ENCODE measurements at regions of chr7 and their contacts with region 1.

Region 1: DNA sequence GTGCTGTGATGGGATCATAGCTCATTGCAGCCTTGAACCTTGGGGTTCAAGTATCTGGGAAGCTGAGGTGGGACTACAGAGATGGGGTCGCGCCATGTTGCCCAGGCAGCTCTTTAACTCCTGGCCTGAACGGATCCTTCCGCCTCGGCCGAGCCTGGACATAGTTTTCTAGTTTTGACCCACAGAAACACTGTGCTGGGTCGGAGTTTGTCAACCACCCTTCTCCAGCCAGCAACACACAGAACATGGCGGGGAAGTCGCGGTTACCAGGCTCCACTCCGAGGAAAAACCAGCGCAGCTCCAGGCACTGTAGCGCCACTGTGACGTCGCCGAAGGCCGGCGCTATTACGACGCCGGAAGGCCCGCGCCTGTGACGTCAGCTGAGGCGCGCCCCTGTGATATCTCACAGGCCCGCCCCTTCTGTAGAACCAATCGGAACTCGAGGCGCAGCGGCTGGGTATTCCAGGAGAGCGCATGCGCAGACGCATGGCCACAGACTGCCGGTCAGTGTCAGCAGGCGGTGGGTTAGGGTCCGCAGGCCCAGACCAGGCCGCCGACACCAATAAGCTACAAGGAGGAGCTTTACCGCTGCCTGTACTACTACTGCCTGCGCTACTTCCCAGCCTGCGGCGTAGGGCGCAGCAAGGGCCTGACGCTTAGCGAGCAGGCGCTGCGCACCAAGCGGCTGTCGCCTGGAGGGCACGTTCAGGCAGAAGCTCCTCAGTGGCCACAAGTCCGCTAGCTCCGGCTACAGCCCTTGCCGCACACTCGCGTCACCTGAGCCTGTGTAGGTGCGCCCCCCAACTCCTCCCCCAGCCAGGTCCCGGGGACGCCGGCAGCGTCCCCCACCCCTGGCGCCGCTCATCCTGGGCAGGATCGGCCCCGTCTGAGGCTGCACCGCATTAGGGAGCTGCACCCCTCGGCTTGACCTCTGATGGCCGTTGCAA is 135.2 kb upstream of the KCTD7 start:
- DNase-seq: peak; percentile 91 to 99 (median 95)
- ATAC-seq: peak; percentile 92
- H3K4me3 ChIP-seq: peak overlapping the region; percentile 87
- H3K4me3 Mint-ChIP-seq: peak overlapping the region; percentile 97
- H3K27ac ChIP-seq: peak overlapping the region; percentile 86 to 95
- H3K27ac Mint-ChIP-seq: peak overlapping the region; percentile 100
- H3K4me1 ChIP-seq: peaks cover 20% of the 10 kb centered on the region
- H3K4me1 Mint-ChIP-seq: peaks cover 22% of the 10 kb centered on the region
- H3K27me3 ChIP-seq: no peaks in the 10 kb centered on the region
- H3K27me3 Mint-ChIP-seq: no peaks in the 10 kb centered on the region
- CTCF ChIP-seq: no peak

Region 2: GRCh38 chr7:64794171-64794844 is 1699.2 kb before region 1 on chr7 and contains the start of gene ZNF138:
- CTCF ChIA-PET with region 1: no interaction called
- POLR2A ChIA-PET with region 1: no interaction called
- intact Hi-C with region 1: loop called in 1 of 2 experiments (anchors 10 kb)
- DNase-seq: peak; percentile 86 to 96 (median 92)
- ATAC-seq: peak; percentile 99
- H3K4me3 ChIP-seq: peak within 1 kb of the TSS; percentile 98
- H3K4me3 Mint-ChIP-seq: peak within 1 kb of the TSS; percentile 98
- H3K27ac ChIP-seq: peak within 1 kb of the TSS; percentile 72 to 88
- H3K27ac Mint-ChIP-seq: peak within 1 kb of the TSS; percentile 98
- H3K4me1 ChIP-seq: peaks cover 27% of the 10 kb centered on the region
- H3K4me1 Mint-ChIP-seq: peaks cover 36% of the 10 kb centered on the region
- H3K27me3 ChIP-seq: no peaks in the 10 kb centered on the region
- H3K27me3 Mint-ChIP-seq: no peaks in the 10 kb centered on the region
- CTCF ChIP-seq: no peak
- total RNA-seq, gene ZNF138: 5.6 to 7.3 TPM

Region 3: DNA sequence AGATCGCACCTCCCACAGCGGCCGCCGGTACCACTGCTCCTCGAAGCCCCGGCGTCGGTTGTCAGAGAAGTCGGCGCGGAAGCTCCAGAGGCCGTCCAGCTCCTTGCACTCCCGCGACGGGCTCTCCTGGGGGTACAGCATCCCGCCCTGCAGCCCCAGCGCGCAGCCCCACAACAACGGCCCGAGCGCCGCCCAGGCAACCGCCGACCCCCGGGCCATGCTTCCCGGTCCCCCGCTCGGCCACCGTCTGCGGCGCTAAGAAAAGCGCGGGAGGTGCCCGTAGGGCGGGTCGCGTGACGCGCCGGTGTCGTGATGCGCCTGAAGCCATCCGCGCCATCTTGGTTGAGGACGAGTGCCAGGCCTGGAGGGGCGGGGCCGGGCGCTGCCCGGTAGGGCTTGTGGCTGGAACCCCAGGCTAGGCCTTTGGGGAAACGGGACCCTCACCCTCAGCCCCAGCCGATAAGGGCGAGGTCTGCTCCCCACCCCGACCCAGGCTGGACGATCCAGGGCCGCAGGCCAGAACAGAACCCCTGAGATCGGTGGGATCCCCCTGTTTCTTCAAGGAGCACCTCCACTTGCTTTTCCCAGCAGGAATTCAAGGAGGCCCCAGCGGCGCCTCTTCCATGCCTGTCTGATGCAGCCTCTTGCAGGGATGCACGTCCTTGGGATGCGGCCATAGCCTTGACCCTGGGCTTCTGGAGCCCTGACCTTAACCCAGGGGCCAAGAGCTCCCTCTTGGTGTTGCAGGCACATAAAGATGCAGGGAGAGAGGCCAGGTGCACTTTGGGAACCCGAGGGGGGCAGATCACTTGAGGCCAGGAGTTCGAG is 511.3 kb before region 1 on chr7 and contains the start of gene GUSB:
- CTCF ChIA-PET with region 1: no interaction called
- POLR2A ChIA-PET with region 1: interaction called, 9 read pairs
- intact Hi-C with region 1: loop called in 1 of 2 experiments (anchors 5 kb)
- DNase-seq: peak; percentile 80 to 92 (median 88)
- ATAC-seq: peak; percentile 83
- H3K4me3 ChIP-seq: peak within 1 kb of the TSS; percentile 83
- H3K4me3 Mint-ChIP-seq: peak within 1 kb of the TSS; percentile 92
- H3K27ac ChIP-seq: peak within 1 kb of the TSS in 1 of 2 donors; percentile 68
- H3K27ac Mint-ChIP-seq: peak within 1 kb of the TSS; percentile 84
- H3K4me1 ChIP-seq: peaks cover 31% of the 10 kb centered on the region
- H3K4me1 Mint-ChIP-seq: peaks cover 9% of the 10 kb centered on the region
- H3K27me3 ChIP-seq: no peaks in the 10 kb centered on the region
- H3K27me3 Mint-ChIP-seq: no peaks in the 10 kb centered on the region
- CTCF ChIP-seq: no peak
- total RNA-seq, gene GUSB: 42.9 to 49.7 TPM

Region 4: DNA sequence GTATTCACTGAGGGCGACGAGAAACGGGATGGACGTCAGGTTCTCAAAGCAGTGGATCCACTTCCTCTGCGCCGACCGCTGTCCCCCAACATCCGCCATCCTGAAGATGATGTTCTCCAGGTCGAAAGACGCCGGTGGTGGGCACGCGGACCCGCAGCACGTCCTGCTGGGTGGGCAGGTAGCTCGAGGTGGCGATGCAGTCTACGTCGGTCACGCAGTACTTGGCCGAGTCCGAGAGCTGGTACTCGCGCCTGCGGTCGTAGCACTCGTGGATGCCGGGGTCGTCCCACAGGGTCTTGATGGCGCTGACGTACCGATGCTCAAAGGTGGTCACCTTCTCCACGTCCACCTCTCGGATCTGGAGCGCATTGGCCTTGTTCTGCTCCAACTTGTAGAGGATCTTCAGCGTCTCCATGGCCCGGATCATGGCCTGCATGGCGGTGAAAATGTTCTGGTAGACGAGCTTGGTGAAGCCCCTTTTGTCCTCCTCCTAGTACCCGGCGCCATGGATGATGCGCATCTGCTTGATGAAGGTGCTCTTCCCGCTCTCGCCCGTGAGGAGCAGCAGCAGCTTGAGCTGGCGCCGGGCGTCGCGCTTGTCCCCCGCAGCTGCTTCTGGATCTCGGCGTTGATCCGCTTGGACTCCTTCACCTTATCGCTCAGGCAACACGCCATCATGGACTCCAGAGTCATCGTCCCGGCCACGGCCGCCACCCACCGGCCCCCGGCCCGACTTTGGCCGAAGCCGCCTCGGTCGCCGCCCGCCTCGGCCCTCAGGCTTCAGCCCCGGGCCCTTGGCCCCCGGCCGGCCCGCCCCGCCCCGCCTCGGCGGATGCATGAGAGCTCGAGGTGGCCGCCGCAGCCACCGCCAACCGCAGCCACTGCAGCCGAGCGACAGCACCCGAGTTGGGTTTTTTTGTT is 12.3 kb after region 1 on chr7:
- CTCF ChIA-PET with region 1: no interaction called
- POLR2A ChIA-PET with region 1: interaction called, 25 read pairs
- intact Hi-C with region 1: no loop called
- DNase-seq: peak in 8 of 14 experiments; percentile 14 to 66 (median 42)
- ATAC-seq: peak; percentile 51
- H3K4me3 ChIP-seq: peak overlapping the region; percentile 34
- H3K4me3 Mint-ChIP-seq: no peak overlapping the region
- H3K27ac ChIP-seq: no peak overlapping the region
- H3K27ac Mint-ChIP-seq: peak overlapping the region; percentile 30
- H3K4me1 ChIP-seq: peaks cover 9% of the 10 kb centered on the region
- H3K4me1 Mint-ChIP-seq: no peaks in the 10 kb centered on the region
- H3K27me3 ChIP-seq: peaks cover 10 to 21% of the 10 kb centered on the region in 2 experiments
- H3K27me3 Mint-ChIP-seq: peaks cover 7% of the 10 kb centered on the region
- CTCF ChIP-seq: no peak

Region 5: GRCh38 chr7:66681491-66682349 is 188.2 kb after region 1 on chr7:
- CTCF ChIA-PET with region 1: no interaction called
- POLR2A ChIA-PET with region 1: interaction called, 7 read pairs
- intact Hi-C with region 1: loop called in 1 of 2 experiments (anchors 5 kb)
- DNase-seq: peak; percentile 87 to 98 (median 95)
- ATAC-seq: peak; percentile 95
- H3K4me3 ChIP-seq: peak overlapping the region; percentile 95
- H3K4me3 Mint-ChIP-seq: peak overlapping the region; percentile 99
- H3K27ac ChIP-seq: peak overlapping the region; percentile 96 to 99
- H3K27ac Mint-ChIP-seq: peak overlapping the region; percentile 98
- H3K4me1 ChIP-seq: peaks cover 29% of the 10 kb centered on the region
- H3K4me1 Mint-ChIP-seq: peaks cover 40% of the 10 kb centered on the region
- H3K27me3 ChIP-seq: no peaks in the 10 kb centered on the region
- H3K27me3 Mint-ChIP-seq: no peaks in the 10 kb centered on the region
- CTCF ChIP-seq: no peak

Region 6: GRCh38 chr7:66920769-66921395 is 427.4 kb after region 1 on chr7 and contains the start of gene TMEM248:
- CTCF ChIA-PET with region 1: no interaction called
- POLR2A ChIA-PET with region 1: interaction called, 8 read pairs
- intact Hi-C with region 1: loop called in 1 of 2 experiments (anchors 10 kb)
- DNase-seq: peak; percentile 85 to 96 (median 91)
- ATAC-seq: peak; percentile 86
- H3K4me3 ChIP-seq: peak within 1 kb of the TSS; percentile 95
- H3K4me3 Mint-ChIP-seq: peak within 1 kb of the TSS; percentile 100
- H3K27ac ChIP-seq: peak within 1 kb of the TSS; percentile 76 to 90
- H3K27ac Mint-ChIP-seq: peak within 1 kb of the TSS; percentile 99
- H3K4me1 ChIP-seq: peaks cover 42% of the 10 kb centered on the region
- H3K4me1 Mint-ChIP-seq: peaks cover 43% of the 10 kb centered on the region
- H3K27me3 ChIP-seq: no peaks in the 10 kb centered on the region
- H3K27me3 Mint-ChIP-seq: no peaks in the 10 kb centered on the region
- CTCF ChIP-seq: no peak
- total RNA-seq, gene TMEM248: 64.7 to 67.4 TPM